ENCODE measurements at regions of chr4 and their contacts with region 1.

Region 1: DNA sequence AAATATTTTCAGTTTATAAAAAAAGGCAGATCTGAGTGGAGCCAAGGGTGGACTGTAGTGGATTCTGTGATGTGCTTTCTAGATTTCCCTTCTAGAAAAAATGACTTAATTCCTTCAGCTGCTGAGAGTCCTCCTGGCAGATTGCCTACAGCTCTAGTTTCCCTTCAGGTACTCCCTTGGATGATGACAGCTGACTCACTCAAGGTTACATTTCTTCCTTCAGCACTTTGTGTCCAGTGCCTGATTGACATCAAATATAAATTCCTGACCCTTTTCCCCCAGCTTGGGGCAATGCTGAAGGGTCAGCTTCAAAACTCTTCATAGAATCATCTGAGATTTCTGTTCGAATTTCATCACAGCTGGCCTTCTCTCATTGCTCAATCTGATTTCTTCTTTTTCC is 161.6 kb downstream of the EMCN start:
- DNase-seq: no peak
- CTCF ChIP-seq: no peak

Region 2: DNA sequence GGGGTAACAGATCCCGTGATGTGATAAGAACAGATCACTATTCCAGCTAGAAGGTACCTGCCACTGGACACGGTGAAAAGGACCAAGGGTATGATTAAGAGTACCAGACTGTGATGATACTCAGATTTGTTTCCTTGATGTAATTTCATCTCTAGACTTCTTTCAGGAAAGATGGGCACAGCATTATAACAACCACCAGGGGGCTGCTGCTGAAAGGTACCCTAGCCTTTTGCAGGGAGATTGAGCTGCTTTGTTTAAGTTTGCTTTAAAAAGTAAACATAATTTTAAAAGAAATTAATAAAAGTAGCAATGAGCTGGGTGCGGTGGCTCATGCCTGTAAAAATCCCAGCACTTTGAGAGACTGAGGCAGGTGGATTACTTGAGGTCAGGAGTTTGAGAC is 16.3 kb after region 1 on chr4:
- CTCF ChIA-PET with region 1: no interaction called
- POLR2A ChIA-PET with region 1: no interaction called
- DNase-seq: no peak
- CTCF ChIP-seq: no peak

Region 3: DNA sequence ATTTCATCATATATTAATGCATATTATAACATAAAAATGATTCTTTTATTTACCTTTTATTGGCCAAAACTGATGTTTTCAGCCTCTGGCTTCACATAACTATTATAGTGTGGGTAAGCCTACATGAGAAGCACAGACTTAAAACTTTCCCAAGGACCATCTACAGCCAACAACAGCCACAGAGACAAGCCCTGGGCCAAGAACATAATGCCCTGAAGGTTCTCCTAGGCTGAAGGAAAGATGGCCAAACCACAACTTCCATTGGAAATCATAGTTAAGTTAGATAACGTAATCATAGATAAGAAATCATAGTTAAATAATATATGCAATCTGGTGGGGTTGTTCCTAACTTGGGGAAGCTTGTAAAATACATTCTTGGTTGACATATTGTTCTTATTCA is 441.6 kb after region 1 on chr4:
- CTCF ChIA-PET with region 1: no interaction called
- POLR2A ChIA-PET with region 1: interaction called, 10 read pairs
- DNase-seq: no peak
- CTCF ChIP-seq: no peak